K562 (cell line): ENCODE measurements at regions of chr7 and their contacts with region 1.

Region 1: DNA sequence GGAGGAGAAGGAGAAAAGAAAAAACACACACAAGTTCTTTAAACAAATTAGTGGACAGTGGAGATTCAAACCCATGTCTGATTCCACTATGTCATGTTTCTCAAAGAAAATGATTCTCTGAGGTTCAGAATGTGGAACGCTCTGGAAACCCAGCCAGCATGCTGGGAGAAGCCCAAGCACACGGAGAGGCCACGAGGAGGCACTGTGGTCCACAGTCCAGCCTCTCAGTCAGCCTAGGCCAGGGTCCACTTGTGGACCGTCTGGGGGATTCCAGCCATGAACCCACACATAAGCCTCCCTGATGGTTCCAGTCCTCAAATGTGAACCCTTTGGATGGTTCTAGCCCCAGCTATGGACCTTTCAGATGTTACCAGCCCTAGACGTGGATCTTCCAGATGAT is 73.4 kb downstream of the CAV1 start:
- DNase-seq: peak; percentile 36 to 65 (median 48)
- ATAC-seq: peak; percentile 98
- H3K4me3 ChIP-seq: no peak overlapping the region
- H3K27ac ChIP-seq: no peak overlapping the region
- H3K4me1 ChIP-seq: no peaks in the 10 kb centered on the region
- H3K27me3 ChIP-seq: peaks cover 7 to 15% of the 10 kb centered on the region in 2 experiments; a peak in 3 of 5 replicates
- CTCF ChIP-seq: peak; percentile 76 to 95 (median 89)
- EP300 ChIP-seq: no peak
- POLR2A ChIP-seq: no peak
- RAD21 ChIP-seq: peak; percentile 89 to 92

Region 2: DNA sequence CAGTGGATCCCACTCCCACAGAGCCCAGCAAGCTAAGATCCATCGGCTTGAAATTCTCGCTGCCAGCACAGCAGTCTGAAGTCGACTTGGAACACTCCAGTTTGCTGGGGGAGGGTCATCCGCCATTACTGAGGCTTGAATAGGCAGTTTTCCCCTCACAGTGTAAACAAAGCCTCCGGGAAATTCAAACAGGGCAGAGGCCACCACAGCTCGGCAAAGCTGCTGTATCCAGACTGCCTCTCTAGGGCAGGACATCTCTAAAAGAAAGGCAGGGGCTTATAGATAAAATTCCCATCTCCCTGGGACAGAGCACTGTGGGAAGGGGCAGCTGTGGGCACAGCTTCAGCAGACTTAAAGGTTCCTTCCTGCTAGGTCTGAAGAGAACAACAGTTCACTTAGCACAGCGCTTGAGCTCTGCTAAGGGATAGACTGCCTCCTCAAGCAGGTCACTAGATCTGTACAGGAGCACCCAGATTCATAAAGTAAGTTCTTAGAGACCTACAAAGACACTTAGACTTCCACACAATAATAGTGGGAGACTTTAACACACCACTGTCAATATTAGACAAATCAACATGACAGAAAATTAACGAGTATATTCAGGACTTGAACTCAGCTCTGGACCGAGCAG is 708.8 kb before region 1 on chr7:
- CTCF ChIA-PET with region 1: no interaction called
- POLR2A ChIA-PET with region 1: no interaction called
- in situ Hi-C with region 1: no loop called
- intact Hi-C with region 1: no loop called
- DNase-seq: no peak
- ATAC-seq: no peak
- H3K4me3 ChIP-seq: no peak overlapping the region
- H3K27ac ChIP-seq: no peak overlapping the region
- H3K4me1 ChIP-seq: no peaks in the 10 kb centered on the region
- H3K27me3 ChIP-seq: no peaks in the 10 kb centered on the region
- CTCF ChIP-seq: no peak
- EP300 ChIP-seq: no peak
- POLR2A ChIP-seq: no peak
- RAD21 ChIP-seq: no peak

Region 3: GRCh38 chr7:116548506-116548905 is 49.8 kb before region 1 on chr7:
- CTCF ChIA-PET with region 1: no interaction called
- POLR2A ChIA-PET with region 1: no interaction called
- in situ Hi-C with region 1: no loop called
- intact Hi-C with region 1: no loop called
- DNase-seq: no peak
- ATAC-seq: no peak; the same call in 2 of the 3 replicates
- H3K4me3 ChIP-seq: no peak overlapping the region
- H3K27ac ChIP-seq: no peak overlapping the region
- H3K4me1 ChIP-seq: peaks cover 0 to 2% of the 10 kb centered on the region in 2 experiments; a peak in 2 of 5 replicates
- H3K27me3 ChIP-seq: peaks cover 3 to 10% of the 10 kb centered on the region in 2 experiments; a peak in 2 of 5 replicates
- CTCF ChIP-seq: no peak
- EP300 ChIP-seq: no peak
- POLR2A ChIP-seq: no peak
- RAD21 ChIP-seq: no peak

Region 4: GRCh38 chr7:116726713-116727431 is 128.6 kb after region 1 on chr7:
- CTCF ChIA-PET with region 1: no interaction called
- POLR2A ChIA-PET with region 1: no interaction called
- in situ Hi-C with region 1: no loop called
- intact Hi-C with region 1: loop called (anchors 5 kb)
- DNase-seq: no peak
- ATAC-seq: peak; percentile 43; the same call in 1 of the 3 replicates
- H3K4me3 ChIP-seq: no peak overlapping the region
- H3K27ac ChIP-seq: no peak overlapping the region
- H3K4me1 ChIP-seq: peaks cover 0 to 4% of the 10 kb centered on the region in 2 experiments; a peak in 1 of 5 replicates
- H3K27me3 ChIP-seq: peaks cover 0 to 6% of the 10 kb centered on the region in 2 experiments; a peak in 2 of 5 replicates
- CTCF ChIP-seq: no peak
- EP300 ChIP-seq: no peak
- POLR2A ChIP-seq: no peak
- RAD21 ChIP-seq: no peak

Region 5: GRCh38 chr7:116786791-116787443 is 188.6 kb after region 1 on chr7:
- CTCF ChIA-PET with region 1: interaction called, 3 read pairs
- POLR2A ChIA-PET with region 1: no interaction called
- in situ Hi-C with region 1: no loop called
- intact Hi-C with region 1: loop called (anchors 1 kb)
- DNase-seq: peak in 1 of 4 experiments; percentile 18
- ATAC-seq: peak; percentile 67; the same call in 2 of the 3 replicates
- H3K4me3 ChIP-seq: no peak overlapping the region
- H3K27ac ChIP-seq: no peak overlapping the region
- H3K4me1 ChIP-seq: no peaks in the 10 kb centered on the region
- H3K27me3 ChIP-seq: peaks cover 5 to 8% of the 10 kb centered on the region in 2 experiments; a peak in 3 of 5 replicates
- CTCF ChIP-seq: peak; percentile 31 to 66 (median 41); a peak in 4 of 6 replicates
- EP300 ChIP-seq: no peak
- POLR2A ChIP-seq: no peak
- RAD21 ChIP-seq: peak; percentile 68 to 73

Region 6: GRCh38 chr7:116802746-116803152 is 204.5 kb after region 1 on chr7:
- CTCF ChIA-PET with region 1: interaction called, 12 read pairs
- POLR2A ChIA-PET with region 1: interaction called, 4 read pairs
- in situ Hi-C with region 1: no loop called
- intact Hi-C with region 1: no loop called
- DNase-seq: peak; percentile 62 to 73 (median 70)
- ATAC-seq: peak; percentile 92
- H3K4me3 ChIP-seq: no peak overlapping the region
- H3K27ac ChIP-seq: no peak overlapping the region
- H3K4me1 ChIP-seq: no peaks in the 10 kb centered on the region
- H3K27me3 ChIP-seq: peaks cover 8 to 22% of the 10 kb centered on the region in 2 experiments; a peak in 4 of 5 replicates
- CTCF ChIP-seq: peak; percentile 74 to 89 (median 82)
- EP300 ChIP-seq: no peak
- POLR2A ChIP-seq: no peak
- RAD21 ChIP-seq: peak; percentile 64 to 79